ENCODE measurements at regions of chr5 and their contacts with region 1.

Region 1: GRCh38 chr5:149990518-149991376 is 9.7 kb downstream of the TIGD6 start:
- H3K4me3 Mint-ChIP-seq: no peak overlapping the region
- H3K27ac Mint-ChIP-seq: no peak overlapping the region
- H3K4me1 Mint-ChIP-seq: peaks cover 3% of the 10 kb centered on the region
- H3K27me3 Mint-ChIP-seq: no peaks in the 10 kb centered on the region

Region 2: GRCh38 chr5:149586791-149587283 is 403.9 kb before region 1 on chr5:
- intact Hi-C with region 1: no loop called
- H3K4me3 Mint-ChIP-seq: no peak overlapping the region
- H3K27ac Mint-ChIP-seq: no peak overlapping the region
- H3K4me1 Mint-ChIP-seq: no peaks in the 10 kb centered on the region
- H3K27me3 Mint-ChIP-seq: peaks cover 11% of the 10 kb centered on the region

Region 3: DNA sequence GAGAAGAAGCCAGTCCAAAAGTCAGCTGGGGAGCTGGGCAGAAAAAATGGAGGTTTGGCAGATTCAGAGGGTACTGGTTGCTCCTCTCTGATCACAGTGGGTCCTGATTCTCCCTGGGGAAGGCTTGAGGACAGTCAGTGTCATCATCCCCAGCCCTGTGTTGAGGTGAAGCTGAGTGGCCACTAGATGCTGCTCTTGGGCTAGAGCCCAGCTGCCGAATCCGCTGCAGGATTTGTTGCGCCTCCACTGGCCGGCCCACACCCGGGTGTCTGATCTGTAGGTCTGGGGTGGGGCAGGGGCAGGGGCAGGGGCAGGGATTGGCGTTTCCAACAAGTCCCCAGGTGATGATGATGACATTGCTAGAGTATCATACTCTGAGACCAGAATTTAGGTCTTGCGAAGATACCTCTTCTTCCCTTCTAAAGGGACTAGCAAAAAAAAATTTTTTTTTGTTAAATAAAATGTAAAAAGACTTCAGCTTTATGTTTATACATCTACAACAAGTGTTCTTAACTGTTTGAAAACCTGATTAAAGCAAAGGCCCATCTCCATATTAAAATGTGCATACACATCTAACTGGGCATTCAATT is 153.0 kb before region 1 on chr5:
- intact Hi-C with region 1: loop called (anchors 5 kb)
- H3K4me3 Mint-ChIP-seq: no peak overlapping the region
- H3K27ac Mint-ChIP-seq: no peak overlapping the region
- H3K4me1 Mint-ChIP-seq: peaks cover 4% of the 10 kb centered on the region
- H3K27me3 Mint-ChIP-seq: no peaks in the 10 kb centered on the region

Region 4: GRCh38 chr5:150511578-150512367 is 521.0 kb after region 1 on chr5:
- intact Hi-C with region 1: no loop called
- H3K4me3 Mint-ChIP-seq: no peak overlapping the region
- H3K27ac Mint-ChIP-seq: peak overlapping the region; percentile 12
- H3K4me1 Mint-ChIP-seq: peaks cover 53% of the 10 kb centered on the region
- H3K27me3 Mint-ChIP-seq: no peaks in the 10 kb centered on the region

Measured in dendritic cell treated with granulocyte-macrophage colony-stimulating factor and Interleukin-4, amounts not matched to agents 40 ng/mL and 50 ng/mL, for 4 days (primary cell).